ENCODE measurements at regions of chr2 and their contacts with region 1.

Region 1: DNA sequence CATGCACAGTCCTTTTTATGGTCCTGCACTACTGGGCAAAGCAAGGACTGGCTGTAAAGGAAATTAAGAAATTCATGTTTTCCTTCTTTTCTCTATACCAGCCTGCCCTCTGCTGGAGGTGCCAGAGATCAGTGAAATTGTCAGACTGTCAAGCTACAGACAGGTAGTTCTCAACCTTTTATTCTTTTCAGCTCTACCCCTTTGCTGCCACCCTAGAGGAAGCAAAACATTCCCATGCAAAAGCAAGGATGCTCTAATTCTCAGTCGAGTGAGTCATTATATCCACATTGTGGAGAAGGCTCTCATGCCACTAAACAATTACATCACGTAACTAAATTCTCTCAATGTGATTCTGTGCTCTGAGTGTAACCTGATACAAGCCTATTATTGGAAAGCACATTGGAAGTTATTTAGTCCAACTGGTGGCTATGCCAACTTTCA is 25.0 kb upstream of the RAPGEF4 start:
- DNase-seq: peak; percentile 24
- H3K4me3 Mint-ChIP-seq: no peak overlapping the region
- H3K27ac Mint-ChIP-seq: no peak overlapping the region
- H3K4me1 Mint-ChIP-seq: no peaks in the 10 kb centered on the region
- H3K27me3 Mint-ChIP-seq: peaks cover 13% of the 10 kb centered on the region

Region 2: GRCh38 chr2:172588931-172589330 is 121.7 kb before region 1 on chr2:
- CTCF ChIA-PET with region 1: interaction called, 10 read pairs
- POLR2A ChIA-PET with region 1: no interaction called
- DNase-seq: no peak
- H3K4me3 Mint-ChIP-seq: no peak overlapping the region
- H3K27ac Mint-ChIP-seq: no peak overlapping the region
- H3K4me1 Mint-ChIP-seq: peaks cover 22% of the 10 kb centered on the region
- H3K27me3 Mint-ChIP-seq: no peaks in the 10 kb centered on the region

Region 3: GRCh38 chr2:172693037-172693436 is 17.6 kb before region 1 on chr2:
- CTCF ChIA-PET with region 1: no interaction called
- POLR2A ChIA-PET with region 1: no interaction called
- DNase-seq: no peak
- H3K4me3 Mint-ChIP-seq: no peak overlapping the region
- H3K27ac Mint-ChIP-seq: no peak overlapping the region
- H3K4me1 Mint-ChIP-seq: peaks cover 13% of the 10 kb centered on the region
- H3K27me3 Mint-ChIP-seq: peaks cover 2% of the 10 kb centered on the region

Measured in activated CD4-positive, alpha-beta memory T cell treated with anti-CD3 and anti-CD28 coated beads, Interleukin-2, amount 10 ng/mL, durations not matched to agents 7 days and 5 days (primary cell).